ENCODE measurements at regions of chr2 and their contacts with region 1.

Region 1: DNA sequence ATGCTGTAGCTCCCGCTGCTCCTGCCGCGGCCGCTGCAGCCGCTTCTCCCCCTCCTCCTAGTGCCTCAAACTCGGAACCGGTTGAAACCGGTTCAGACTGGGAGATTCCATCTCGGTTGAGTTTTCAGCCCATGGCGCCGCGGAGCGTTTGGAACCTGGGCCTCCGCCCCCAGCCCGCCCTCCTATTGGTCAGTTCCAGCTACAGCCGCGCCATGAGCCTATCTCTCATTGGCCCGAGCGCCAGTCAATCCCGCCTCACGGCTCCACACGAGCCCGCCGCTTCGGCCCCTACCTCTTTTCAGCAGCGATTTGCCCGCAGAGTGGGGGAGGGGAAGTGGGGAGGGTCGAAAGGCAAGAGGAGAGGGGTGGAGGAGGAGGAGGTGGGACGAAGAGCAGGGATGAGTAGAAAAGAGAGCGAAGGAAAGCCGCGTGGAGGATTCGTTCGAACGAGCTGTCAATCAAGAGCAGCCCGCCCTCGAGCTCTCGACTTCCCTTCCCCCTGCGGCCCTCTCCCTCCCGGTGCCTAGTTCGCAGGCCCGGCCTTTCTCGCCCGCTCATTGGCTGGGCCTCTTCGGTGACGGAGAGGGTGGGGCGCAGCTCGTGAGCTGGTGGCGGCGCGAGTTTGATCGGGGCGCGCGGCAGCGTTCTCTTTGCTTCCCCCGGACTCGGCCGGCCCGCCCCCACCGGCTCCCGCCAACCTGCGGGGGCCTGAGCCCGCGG is at the start of gene XPO1:
- DNase-seq: peak; percentile 96 to 100 (median 99)
- ATAC-seq: peak; percentile 80 to 82
- H3K4me3 Mint-ChIP-seq: peak within 1 kb of the TSS; percentile 89 to 99 (median 96)
- H3K27ac Mint-ChIP-seq: peak within 1 kb of the TSS; percentile 95 to 100 (median 100)
- H3K4me1 Mint-ChIP-seq: peaks cover 25 to 45% (median 37%) of the 10 kb centered on the region in 4 donors
- H3K27me3 Mint-ChIP-seq: peaks cover 0 to 2% (median 0%) of the 10 kb centered on the region in 5 donors
- polyA plus RNA-seq, gene XPO1: 27.3 to 43.5 (median 32.8) TPM

Region 2: DNA sequence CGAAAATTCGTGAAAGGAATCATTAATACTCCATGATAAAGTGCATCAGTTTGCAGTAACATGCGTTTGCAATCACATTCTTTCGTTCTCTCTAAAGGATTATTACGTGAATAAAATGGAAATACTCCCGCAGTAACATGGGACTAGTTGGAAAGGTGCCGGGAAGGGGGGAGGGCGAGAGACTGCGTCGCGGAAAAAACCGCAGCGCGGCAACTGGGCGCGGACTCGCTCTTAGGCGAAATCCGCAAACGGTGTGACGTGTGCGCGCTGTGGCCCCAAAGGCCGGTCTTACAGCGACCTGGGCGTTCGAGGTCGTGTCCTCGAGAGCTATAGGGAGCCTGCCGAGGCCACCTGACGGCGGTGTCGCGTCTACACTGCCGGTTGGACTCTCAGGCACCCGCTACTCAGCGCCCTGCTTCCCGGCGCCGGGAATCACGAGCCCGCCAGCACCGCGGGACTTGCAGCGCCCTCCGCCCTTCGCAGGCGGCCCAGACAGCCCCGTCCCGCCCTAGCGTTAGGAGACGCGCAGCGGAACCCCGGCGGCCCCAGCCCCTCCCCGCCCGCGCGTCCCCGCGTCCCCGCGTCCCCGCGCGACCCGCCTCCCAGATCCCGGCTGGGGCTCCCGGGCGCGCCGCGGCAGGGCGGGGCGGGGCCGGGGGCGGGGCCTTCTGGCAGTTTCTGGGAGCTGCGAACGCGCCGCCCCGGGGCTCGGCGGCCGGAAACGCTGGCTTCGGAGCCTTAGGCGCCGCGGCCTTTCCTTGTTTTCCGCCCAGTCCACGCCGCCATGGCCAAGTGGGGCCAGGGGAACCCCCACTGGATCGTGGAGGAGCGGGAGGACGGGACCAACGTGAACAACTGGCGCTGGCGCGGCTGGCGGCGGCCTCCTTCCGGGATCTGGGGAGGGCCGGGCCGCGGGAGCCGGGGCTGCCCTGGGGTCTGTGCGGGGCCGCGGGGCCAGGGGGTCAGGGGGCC is 361.3 kb before region 1 on chr2:
- POLR2A ChIA-PET with region 1: interaction called, 19 read pairs
- DNase-seq: peak; percentile 85 to 98 (median 92)
- ATAC-seq: peak; percentile 87 to 89
- H3K4me3 Mint-ChIP-seq: peak overlapping the region; percentile 80 to 97 (median 93)
- H3K27ac Mint-ChIP-seq: peak overlapping the region; percentile 89 to 99 (median 94)
- H3K4me1 Mint-ChIP-seq: peaks cover 32 to 58% (median 54%) of the 10 kb centered on the region in 4 donors
- H3K27me3 Mint-ChIP-seq: no peaks in the 10 kb centered on the region

Region 3: DNA sequence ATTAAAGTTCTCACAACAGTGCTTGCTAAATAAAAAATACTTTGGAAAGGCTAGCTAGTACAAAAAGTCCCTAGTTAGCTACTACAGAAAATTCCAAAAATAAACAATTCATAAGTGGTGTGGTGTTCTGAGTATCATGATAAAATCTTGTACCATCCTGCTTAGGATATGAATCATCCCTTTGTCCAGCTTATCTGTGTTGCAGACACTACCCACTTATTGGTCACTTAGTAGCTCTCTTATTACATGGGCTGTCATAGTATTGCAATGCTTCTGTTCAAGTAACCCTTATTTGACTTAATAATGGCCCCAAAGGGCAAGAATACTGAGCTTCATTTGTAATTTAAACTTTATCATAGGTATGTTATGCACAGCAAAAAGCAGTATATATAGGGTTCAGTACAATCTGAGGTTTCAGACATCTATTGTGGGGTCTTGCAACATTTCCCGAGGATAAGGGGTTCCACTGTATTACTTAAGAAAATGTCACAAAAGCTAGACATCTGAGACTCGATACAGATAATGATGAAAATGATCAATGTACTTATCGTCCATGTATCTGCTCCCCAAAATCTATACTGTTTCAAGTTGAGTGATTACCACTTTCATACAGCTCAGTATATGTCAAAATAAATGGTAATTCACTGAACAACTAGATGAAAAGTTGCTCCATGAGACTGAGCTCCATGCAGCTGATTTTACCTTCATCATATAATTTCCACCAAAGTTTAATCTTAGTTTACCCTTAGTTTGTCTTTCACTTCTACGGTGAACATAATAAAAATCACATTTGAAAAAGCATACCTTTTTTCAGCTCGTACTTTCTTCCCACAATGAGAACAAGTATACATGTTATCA is 282.6 kb before region 1 on chr2:
- POLR2A ChIA-PET with region 1: no interaction called
- DNase-seq: no peak
- ATAC-seq: no peak
- H3K4me3 Mint-ChIP-seq: no peak overlapping the region
- H3K27ac Mint-ChIP-seq: peak overlapping the region in 1 of 10 donors; percentile 25
- H3K4me1 Mint-ChIP-seq: peaks cover 0 to 7% (median 0%) of the 10 kb centered on the region in 4 donors
- H3K27me3 Mint-ChIP-seq: no peaks in the 10 kb centered on the region

Region 4: GRCh38 chr2:61420991-61421544 is 117.3 kb before region 1 on chr2:
- POLR2A ChIA-PET with region 1: interaction called, 49 read pairs
- DNase-seq: no peak
- ATAC-seq: no peak
- H3K4me3 Mint-ChIP-seq: peak overlapping the region; percentile 4 to 74 (median 59)
- H3K27ac Mint-ChIP-seq: peak overlapping the region; percentile 57 to 97 (median 84)
- H3K4me1 Mint-ChIP-seq: peaks cover 29 to 80% (median 61%) of the 10 kb centered on the region in 4 donors
- H3K27me3 Mint-ChIP-seq: no peaks in the 10 kb centered on the region

Region 5: GRCh38 chr2:61426267-61426897 is 112.0 kb before region 1 on chr2:
- POLR2A ChIA-PET with region 1: interaction called, 49 read pairs
- DNase-seq: peak; percentile 60 to 85 (median 74)
- ATAC-seq: peak; percentile 81 to 87
- H3K4me3 Mint-ChIP-seq: peak overlapping the region in 9 of 10 donors; percentile 51 to 85 (median 71)
- H3K27ac Mint-ChIP-seq: peak overlapping the region; percentile 94 to 98 (median 97)
- H3K4me1 Mint-ChIP-seq: peaks cover 37 to 72% (median 65%) of the 10 kb centered on the region in 4 donors
- H3K27me3 Mint-ChIP-seq: no peaks in the 10 kb centered on the region

Region 6: DNA sequence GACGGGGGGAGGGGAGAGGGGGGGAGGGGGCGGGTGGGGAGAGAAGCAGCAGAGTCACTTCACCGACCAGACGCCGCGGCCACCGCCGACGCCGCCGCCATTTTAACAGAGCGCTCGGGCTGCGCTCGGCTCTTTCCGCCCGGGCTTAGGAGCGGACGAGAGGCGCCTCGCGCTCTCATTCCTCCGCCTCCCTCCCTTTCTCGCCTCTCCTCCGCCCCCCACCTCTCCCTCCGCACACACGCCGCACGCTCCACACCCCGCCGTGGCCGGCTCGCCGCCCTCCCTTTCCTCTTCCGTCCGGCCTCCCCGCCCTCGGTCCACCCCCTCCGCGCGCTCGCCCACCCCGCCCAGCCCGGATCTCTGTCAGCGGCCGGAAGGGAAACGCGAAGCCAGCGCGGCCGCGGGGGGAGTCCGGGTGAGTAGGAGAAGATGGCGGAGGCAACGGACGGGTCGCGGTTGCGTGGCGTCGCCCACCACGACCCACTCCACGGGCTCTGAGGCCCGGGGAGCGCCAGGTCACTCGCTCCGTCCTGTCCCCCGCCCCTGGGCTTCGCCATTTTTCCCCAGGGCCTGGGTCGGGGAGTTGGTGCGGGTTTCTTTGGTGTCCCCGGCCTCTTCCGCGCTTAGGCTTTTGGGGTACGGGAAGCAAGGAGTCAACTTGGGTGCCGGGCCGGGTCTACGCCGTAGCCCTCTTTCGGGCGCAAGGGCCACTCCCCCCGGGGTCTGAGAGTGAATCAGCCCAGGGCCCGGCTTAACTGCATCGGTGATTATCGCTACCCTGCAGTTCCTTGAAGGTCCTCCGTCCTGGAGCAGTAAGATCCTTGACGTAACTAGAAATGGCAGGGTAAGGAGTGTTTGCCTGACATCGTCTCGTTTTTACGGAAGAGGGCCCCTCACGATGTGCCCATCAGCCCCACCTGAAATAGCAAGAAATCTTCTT is 67.1 kb before region 1 on chr2 and contains the start of gene USP34:
- POLR2A ChIA-PET with region 1: interaction called, 79 read pairs
- DNase-seq: peak; percentile 86 to 97 (median 91)
- ATAC-seq: peak; percentile 87 to 88
- H3K4me3 Mint-ChIP-seq: peak within 1 kb of the TSS; percentile 86 to 99 (median 94)
- H3K27ac Mint-ChIP-seq: peak within 1 kb of the TSS; percentile 95 to 100 (median 98)
- H3K4me1 Mint-ChIP-seq: peaks cover 5 to 47% (median 34%) of the 10 kb centered on the region in 4 donors
- H3K27me3 Mint-ChIP-seq: no peaks in the 10 kb centered on the region
- polyA plus RNA-seq, gene USP34: 14.5 to 19.1 (median 17.6) TPM

Region 7: DNA sequence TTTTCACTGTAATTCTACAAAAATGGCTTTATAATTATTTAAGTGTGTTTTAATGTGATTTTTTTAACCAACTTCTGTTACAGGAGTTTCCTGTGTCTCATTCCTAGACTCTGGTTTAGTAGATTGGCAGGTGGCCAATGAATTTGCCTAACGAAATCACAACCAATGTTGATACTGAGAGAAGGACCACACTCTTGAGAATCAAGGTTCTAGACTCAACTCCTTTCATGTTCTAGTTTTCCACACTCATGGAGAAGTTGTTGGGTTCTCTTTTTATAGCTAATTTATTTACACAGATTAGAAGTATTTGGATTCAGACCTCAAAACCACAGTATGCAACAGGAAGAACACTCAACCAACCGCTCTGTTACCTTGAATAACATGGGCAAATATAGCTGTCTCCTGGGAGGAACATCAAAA is 44.8 kb before region 1 on chr2:
- POLR2A ChIA-PET with region 1: interaction called, 10 read pairs
- DNase-seq: peak in 4 of 10 donors; percentile 14 to 41 (median 28)
- ATAC-seq: peak; percentile 54 to 62
- H3K4me3 Mint-ChIP-seq: peak overlapping the region in 8 of 10 donors; percentile 43 to 62 (median 52)
- H3K27ac Mint-ChIP-seq: peak overlapping the region; percentile 21 to 94 (median 78)
- H3K4me1 Mint-ChIP-seq: peaks cover 10 to 19% (median 14%) of the 10 kb centered on the region in 4 donors
- H3K27me3 Mint-ChIP-seq: no peaks in the 10 kb centered on the region

Region 8: DNA sequence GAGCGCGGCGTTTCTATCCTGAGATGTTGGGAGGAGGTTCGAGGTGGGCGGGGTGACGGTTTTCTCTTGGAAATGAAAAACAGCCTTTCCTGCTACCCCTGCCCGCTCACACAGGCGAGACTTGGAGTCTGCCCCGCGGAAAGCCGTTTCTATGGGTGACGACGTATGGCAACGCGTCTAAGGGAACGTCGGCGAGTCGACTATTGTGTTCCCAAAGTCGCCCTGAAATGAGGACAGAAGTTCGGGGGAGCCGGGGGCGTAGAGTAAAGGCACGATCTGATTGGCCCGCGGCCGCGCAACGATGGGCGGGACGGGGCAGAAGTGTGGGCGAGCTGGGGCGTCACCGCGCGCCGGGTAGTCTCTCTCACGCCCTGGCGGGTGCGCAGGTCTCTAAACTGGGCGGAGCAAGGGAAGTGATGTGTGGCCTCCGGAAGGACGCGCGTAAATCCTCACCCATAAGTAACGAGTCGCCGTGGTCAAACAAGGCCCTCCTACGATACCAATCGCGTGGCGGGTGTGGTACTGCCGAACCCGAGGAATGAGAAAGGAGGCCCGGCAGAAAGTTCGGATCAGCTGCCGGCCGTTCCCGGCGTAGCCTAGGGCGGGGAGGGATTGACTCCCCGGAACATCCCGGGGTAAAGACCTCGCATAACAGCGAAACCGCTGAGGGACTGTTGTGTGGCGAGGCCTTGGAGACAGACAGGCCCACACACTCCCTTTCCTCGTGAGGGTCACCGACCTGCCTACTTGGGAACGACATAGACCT is 225.9 kb after region 1 on chr2:
- POLR2A ChIA-PET with region 1: interaction called, 18 read pairs
- DNase-seq: peak; percentile 89 to 99 (median 97)
- ATAC-seq: peak; percentile 96
- H3K4me3 Mint-ChIP-seq: peak overlapping the region; percentile 80 to 99 (median 96)
- H3K27ac Mint-ChIP-seq: peak overlapping the region; percentile 96 to 99 (median 99)
- H3K4me1 Mint-ChIP-seq: peaks cover 0 to 23% (median 7%) of the 10 kb centered on the region in 4 donors
- H3K27me3 Mint-ChIP-seq: peaks cover 0 to 1% (median 0%) of the 10 kb centered on the region in 5 donors

Measured in naive thymus-derived CD8-positive, alpha-beta T cell (primary cell).